Psoas muscle (tissue), 8 donors: ENCODE measurements at regions of chr1 and their contacts with region 1.

Region 1: DNA sequence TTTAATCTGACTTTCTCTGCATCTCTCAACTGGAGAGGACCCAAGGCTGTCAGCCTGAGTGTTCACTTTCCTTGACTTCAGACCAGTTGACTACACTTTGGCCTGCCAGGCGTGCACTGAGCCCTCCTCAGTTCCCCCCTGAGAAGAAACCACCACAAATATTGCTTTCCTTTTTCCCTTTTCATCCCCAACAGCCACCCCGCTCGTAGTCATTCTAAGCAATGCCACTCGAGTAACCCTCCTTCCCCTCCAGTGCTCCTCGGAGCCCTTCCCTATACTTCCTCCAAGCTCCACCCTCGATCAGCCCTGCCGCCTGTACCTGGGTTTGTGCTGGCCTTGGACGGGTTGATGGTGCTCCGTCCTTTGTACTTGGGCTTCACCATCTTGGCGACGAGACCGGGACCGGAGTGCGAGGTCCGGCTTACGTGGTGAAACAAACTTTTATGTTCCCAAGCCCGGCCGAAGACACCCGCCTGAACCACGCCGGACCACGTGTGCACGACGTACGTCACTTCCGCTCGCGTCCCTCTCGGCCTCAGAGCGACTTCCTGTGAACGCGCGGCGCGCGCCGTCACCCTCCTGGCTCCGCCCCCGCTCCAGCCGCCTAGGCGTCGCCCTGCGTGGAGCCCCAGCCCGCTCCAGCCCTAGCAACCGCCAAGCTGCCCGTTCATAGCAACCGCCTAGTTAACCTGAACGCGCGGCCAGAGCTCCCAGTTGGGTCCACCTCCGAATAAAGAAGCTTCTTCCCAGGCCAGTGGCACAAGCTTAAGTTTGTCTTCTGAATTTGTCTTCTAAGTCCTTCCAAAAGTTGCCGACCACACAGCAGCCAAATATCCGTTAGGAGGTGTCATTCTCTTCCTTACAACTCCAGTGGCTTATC is at the start of gene GNL2:
- DNase-seq: peak; percentile 97 to 99
- ATAC-seq: peak; percentile 100
- H3K4me3 ChIP-seq: peak within 1 kb of the TSS; percentile 91
- H3K27ac ChIP-seq: peak within 1 kb of the TSS; percentile 94
- H3K4me1 ChIP-seq: peaks cover 18% of the 10 kb centered on the region
- H3K27me3 ChIP-seq: peaks cover 0 to 2% (median 0%) of the 10 kb centered on the region in 3 donors
- CTCF ChIP-seq: no peak
- total RNA-seq, gene GNL2: 29.6 to 52.3 (median 49.5) TPM

Region 2: DNA sequence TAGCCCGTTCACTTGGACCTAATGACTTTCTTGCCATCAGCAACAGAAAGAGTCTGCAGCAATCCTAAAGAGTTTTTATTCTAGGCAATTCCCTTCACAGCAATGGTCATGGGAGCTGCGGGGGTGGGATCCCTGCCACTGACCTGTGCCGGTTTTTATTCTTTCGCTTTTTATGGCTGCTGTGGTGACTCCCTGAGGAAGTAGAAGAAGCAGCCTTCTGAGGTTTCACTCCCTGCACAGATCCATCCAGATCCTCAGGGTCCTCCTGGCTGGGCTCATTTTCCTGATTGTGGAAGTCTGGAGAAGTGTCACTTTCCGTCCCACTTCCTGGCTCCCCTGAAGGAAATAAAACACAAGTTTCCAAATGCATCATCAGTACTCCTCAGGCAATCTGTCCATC is 94.0 kb before region 1 on chr1:
- intact Hi-C with region 1: loop called in 1 of 2 experiments (anchors 5 kb)
- DNase-seq: no peak
- ATAC-seq: no peak
- H3K4me3 ChIP-seq: no peak overlapping the region
- H3K27ac ChIP-seq: no peak overlapping the region
- H3K4me1 ChIP-seq: peaks cover 9% of the 10 kb centered on the region
- H3K27me3 ChIP-seq: no peaks in the 10 kb centered on the region
- CTCF ChIP-seq: no peak

Region 3: GRCh38 chr1:37553927-37554808 is 41.5 kb before region 1 on chr1 and contains the start of gene SNIP1:
- intact Hi-C with region 1: loop called in 1 of 2 experiments (anchors 5 kb)
- DNase-seq: peak; percentile 91 to 95
- ATAC-seq: peak; percentile 97 to 98 (median 98)
- H3K4me3 ChIP-seq: peak within 1 kb of the TSS; percentile 95
- H3K27ac ChIP-seq: peak within 1 kb of the TSS; percentile 97
- H3K4me1 ChIP-seq: peaks cover 20% of the 10 kb centered on the region
- H3K27me3 ChIP-seq: no peaks in the 10 kb centered on the region
- CTCF ChIP-seq: no peak
- total RNA-seq, gene SNIP1: 8.1 to 11.9 (median 9.3) TPM

Region 4: GRCh38 chr1:37672136-37672870 is 76.6 kb after region 1 on chr1:
- intact Hi-C with region 1: no loop called
- DNase-seq: no peak
- ATAC-seq: no peak
- H3K4me3 ChIP-seq: no peak overlapping the region
- H3K27ac ChIP-seq: no peak overlapping the region
- H3K4me1 ChIP-seq: no peaks in the 10 kb centered on the region
- H3K27me3 ChIP-seq: peaks cover 0 to 35% (median 4%) of the 10 kb centered on the region in 3 donors
- CTCF ChIP-seq: no peak

Region 5: DNA sequence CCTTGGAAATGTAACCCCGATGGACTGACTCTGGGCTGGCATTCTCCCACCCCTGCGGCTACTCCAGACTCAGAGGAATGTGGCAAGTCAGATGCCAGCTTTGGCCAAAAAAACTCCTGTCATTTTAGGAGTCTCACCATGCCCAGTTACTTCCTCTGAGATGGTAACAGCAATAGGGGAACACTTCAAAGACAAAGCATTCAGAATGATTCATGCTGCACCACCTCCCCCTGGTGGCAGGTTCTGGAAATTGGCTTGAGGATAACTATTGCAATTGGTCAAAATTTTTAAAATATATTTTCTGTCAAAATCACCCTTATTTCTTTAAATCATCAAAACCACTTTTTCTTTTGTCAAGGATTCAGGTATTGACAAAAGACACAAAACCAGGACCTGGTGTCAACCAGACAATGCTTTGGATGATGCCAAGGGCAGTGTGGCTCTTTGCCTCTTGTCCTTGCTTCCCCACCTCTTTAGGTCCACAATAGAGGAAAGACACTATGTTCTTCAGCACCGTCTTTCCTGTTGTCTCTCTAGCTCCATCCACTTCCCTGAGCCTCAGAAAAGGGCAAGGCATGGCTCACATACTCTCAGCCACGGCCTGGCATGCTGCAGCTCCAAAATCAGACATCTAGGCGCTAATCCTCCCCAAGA is 86.8 kb after region 1 on chr1:
- intact Hi-C with region 1: loop called in 1 of 2 experiments (anchors 5 kb)
- DNase-seq: peak; percentile 58 to 76
- ATAC-seq: peak; percentile 64 to 87 (median 76)
- H3K4me3 ChIP-seq: no peak overlapping the region
- H3K27ac ChIP-seq: no peak overlapping the region
- H3K4me1 ChIP-seq: peaks cover 3% of the 10 kb centered on the region
- H3K27me3 ChIP-seq: no peaks in the 10 kb centered on the region
- CTCF ChIP-seq: peak; percentile 87

Region 6: GRCh38 chr1:37807555-37808368 is 212.1 kb after region 1 on chr1 and contains the starts of genes C1orf122 and YRDC:
- intact Hi-C with region 1: loop called in 1 of 2 experiments (anchors 10 kb)
- DNase-seq: peak; percentile 95 to 97
- ATAC-seq: peak; percentile 95 to 96 (median 95)
- H3K4me3 ChIP-seq: peak within 1 kb of the TSS; percentile 88
- H3K27ac ChIP-seq: peak within 1 kb of the TSS; percentile 93
- H3K4me1 ChIP-seq: peaks cover 19% of the 10 kb centered on the region
- H3K27me3 ChIP-seq: no peaks in the 10 kb centered on the region
- CTCF ChIP-seq: no peak
- total RNA-seq, gene C1orf122: 26.6 to 32.1 (median 28.1) TPM
- total RNA-seq, gene YRDC: 3.4 to 12.5 (median 10.2) TPM

Region 7: GRCh38 chr1:38834937-38835827 is 1239.5 kb after region 1 on chr1:
- intact Hi-C with region 1: loop called in 1 of 2 experiments (anchors 10 kb)
- DNase-seq: no peak
- ATAC-seq: peak; percentile 80 to 95 (median 88)
- H3K4me3 ChIP-seq: no peak overlapping the region
- H3K27ac ChIP-seq: no peak overlapping the region
- H3K4me1 ChIP-seq: peaks cover 6% of the 10 kb centered on the region
- H3K27me3 ChIP-seq: no peaks in the 10 kb centered on the region
- CTCF ChIP-seq: peak; percentile 82